GM13976 (cell line): ENCODE measurements at regions of chr11 and their contacts with region 1.

Region 1: DNA sequence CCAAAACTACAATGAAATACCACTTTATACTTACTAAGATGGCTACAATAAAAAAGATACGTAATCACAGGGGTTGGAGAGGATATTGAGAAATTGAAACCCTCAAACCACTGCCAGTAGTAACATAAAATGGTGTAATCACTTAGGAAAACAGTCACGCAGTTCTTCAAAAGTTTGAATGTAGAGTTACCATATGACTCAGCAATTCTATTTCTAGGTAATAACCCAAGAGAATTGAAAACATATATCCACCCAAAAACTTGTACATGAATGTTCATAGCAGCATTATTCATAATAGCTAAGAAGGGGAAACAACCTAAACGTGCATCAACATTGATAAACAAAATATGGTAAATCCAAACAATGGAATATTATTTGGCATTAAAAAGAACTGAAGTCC is 24.4 kb upstream of the PSMA1 start:
- DNase-seq: peak; percentile 36
- CTCF ChIP-seq: no peak

Region 2: GRCh38 chr11:14358729-14359439 is 185.7 kb before region 1 on chr11 and contains the start of gene RRAS2:
- in situ Hi-C with region 1: no loop called
- DNase-seq: peak; percentile 90
- CTCF ChIP-seq: no peak

Region 3: GRCh38 chr11:14643697-14644225 is 99.2 kb after region 1 on chr11 and contains the start of gene PDE3B:
- in situ Hi-C with region 1: no loop called
- DNase-seq: peak; percentile 86
- CTCF ChIP-seq: no peak

Region 4: DNA sequence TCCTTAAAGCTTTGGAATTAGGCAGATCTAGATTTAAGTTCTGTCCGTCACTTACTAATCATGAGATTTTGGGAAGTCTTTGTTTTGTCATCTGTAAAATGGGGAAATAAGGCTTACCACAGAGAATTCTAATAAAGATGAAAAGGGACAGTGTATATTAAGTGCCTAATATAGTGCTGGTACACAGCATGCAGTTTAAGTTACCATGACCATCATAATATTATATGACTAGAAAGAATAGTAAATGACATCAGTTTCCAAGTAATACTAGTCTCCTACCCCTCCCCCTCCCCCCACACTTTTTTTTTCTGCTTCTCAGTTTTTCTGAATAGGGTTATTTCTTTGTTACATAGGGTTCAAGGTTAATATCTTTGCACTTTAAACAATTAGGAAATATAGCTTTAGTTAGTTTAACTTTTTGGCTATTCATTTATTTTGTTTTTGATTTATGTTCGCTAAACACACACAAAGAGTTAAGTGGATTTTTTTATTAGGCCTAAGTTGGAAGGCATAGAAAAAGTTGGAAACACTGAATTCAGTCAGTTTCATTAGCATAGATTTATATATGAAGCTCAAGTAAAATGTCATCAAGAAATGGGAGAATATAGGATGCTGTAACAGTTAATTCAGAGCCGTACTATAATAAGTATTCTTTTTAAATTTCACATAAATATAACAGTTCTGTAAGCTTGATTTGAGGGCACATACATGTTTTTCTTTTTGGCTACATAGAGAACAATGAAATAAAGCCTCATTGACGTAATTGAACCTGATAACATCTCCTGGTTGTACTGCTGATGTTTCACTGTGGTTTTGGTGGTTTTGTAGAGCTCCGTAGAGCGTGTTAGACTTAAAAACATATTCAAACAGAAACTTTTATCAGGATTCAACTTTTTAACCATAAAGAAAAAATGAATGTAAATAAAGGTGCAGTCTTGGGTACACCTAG is 220.2 kb after region 1 on chr11:
- in situ Hi-C with region 1: loop called (anchors 10 kb)
- DNase-seq: peak; percentile 41
- CTCF ChIP-seq: no peak

Region 5: GRCh38 chr11:14892036-14892567 is 347.5 kb after region 1 on chr11 and contains the start of gene CYP2R1:
- in situ Hi-C with region 1: loop called (anchors 10 kb)
- DNase-seq: peak; percentile 93
- CTCF ChIP-seq: no peak